ENCODE measurements at regions of chr18 and their contacts with region 1.

Region 1: DNA sequence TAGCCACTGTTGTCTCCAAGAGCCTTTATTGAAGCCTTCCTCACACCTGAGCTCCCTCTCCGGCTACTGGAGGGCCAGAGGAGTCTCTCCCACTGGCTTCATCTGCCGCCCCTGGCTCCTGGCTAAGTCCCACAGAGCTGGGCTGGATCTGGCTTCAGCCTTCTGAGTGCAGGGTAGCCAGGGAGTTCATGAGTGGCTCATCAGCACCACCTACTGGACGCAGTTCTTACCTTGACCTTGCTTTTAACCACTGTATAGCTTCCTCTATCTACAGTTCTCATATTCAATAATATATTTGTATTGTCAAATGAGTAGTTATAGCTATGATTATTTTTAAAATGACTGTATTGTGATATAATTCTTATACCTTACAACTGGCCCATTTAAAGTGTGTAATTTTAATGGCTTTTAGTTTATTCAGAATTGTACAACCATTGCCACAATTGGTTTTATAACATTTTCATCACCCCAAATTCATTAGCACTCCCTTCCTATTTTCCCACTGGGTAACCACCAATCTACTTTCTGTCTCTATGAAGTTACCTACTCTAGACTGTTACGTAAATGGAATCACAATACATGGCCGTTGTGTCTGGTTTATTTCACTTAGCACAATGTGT is 17.7 kb downstream of the CNDP1 start:
- DNase-seq: peak; percentile 87
- H3K4me3 ChIP-seq: no peak overlapping the region
- H3K27ac ChIP-seq: no peak overlapping the region
- H3K4me1 ChIP-seq: no peaks in the 10 kb centered on the region
- H3K27me3 ChIP-seq: no peaks in the 10 kb centered on the region
- CTCF ChIP-seq: peak; percentile 52 to 80 (median 62)
- EP300 ChIP-seq: no peak
- POLR2A ChIP-seq: no peak

Region 2: DNA sequence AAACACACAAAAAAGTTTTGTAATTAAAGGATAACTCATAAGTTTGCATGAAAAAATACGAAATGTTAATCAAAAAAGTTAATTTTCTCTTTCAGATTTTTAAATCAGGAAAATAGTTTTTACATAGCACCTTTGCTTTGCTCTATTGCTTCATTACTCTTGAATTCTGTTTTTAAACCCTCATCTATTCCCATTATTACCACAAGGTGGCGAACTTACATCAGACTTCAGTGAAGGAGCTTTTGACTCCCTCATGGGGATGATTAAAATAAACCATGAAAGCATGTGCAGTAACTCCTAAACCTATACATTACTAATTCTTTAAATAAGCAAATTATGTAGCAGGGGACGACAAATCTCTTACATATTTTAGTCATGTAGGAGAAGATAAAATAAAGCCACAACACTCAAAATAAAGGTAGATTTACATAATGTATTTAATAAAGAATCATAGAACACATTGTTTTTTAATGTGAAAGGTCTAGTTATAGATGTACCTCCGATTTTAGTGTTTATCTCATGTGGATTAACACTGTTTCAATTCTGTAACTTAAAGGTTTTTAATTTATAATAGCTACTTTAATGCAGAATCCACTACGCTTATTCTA is 1789.4 kb before region 1 on chr18:
- intact Hi-C with region 1: loop called (anchors 10 kb)
- DNase-seq: no peak
- H3K4me3 ChIP-seq: no peak overlapping the region
- H3K27ac ChIP-seq: no peak overlapping the region
- H3K4me1 ChIP-seq: no peaks in the 10 kb centered on the region
- H3K27me3 ChIP-seq: no peaks in the 10 kb centered on the region
- CTCF ChIP-seq: peak in 3 of 4 experiments; percentile 37 to 65 (median 53)
- EP300 ChIP-seq: no peak
- POLR2A ChIP-seq: no peak

Region 3: DNA sequence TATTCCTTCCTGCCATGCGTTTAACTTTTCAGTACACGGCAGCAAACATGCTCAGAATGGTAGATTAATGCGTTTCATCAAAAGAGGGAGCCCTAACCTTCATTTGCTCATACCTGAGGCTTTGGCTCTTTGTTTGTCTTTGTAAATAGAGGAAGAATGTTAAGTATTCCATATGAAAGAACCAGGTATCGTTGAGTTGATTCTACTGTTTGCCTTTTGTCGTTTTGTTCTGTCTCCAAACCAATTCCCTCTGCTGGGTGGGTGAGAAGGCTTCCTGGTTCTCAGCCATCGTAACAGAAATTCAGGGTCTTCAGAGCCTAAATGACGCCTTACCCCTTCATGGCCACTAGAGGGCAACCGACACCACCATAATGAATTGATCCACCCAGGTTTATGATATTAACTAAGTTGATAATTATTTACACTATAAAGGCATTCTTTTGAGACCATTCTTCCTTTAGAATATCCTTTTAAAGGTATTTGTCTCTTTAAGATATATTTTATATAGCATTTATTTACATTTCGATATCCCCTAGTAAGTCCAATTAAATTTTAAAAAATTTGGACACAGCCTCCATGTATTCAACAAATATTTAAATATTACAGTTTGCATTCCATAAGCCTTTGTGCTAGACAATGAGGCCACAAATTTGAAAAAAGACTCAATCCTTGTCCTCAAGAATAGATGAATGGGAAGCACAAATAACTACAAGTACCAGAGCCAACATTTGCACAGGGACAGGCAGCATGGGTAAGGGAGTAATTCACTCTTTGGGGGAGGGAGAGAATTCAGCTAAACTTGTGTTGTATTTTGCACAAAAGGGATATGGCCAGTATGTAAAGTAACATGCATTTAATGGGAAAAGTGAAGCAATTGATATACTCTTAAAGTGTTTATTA is 355.6 kb before region 1 on chr18:
- intact Hi-C with region 1: loop called (anchors 2 kb)
- DNase-seq: no peak
- H3K4me3 ChIP-seq: peak overlapping the region in 3 of 4 donors; percentile 2 to 34 (median 22)
- H3K27ac ChIP-seq: no peak overlapping the region
- H3K4me1 ChIP-seq: peaks cover 0 to 14% (median 6%) of the 10 kb centered on the region in 4 donors
- H3K27me3 ChIP-seq: peaks cover 0 to 6% (median 0%) of the 10 kb centered on the region in 3 donors
- CTCF ChIP-seq: peak; percentile 71 to 91 (median 86)
- EP300 ChIP-seq: no peak
- POLR2A ChIP-seq: no peak

Region 4: DNA sequence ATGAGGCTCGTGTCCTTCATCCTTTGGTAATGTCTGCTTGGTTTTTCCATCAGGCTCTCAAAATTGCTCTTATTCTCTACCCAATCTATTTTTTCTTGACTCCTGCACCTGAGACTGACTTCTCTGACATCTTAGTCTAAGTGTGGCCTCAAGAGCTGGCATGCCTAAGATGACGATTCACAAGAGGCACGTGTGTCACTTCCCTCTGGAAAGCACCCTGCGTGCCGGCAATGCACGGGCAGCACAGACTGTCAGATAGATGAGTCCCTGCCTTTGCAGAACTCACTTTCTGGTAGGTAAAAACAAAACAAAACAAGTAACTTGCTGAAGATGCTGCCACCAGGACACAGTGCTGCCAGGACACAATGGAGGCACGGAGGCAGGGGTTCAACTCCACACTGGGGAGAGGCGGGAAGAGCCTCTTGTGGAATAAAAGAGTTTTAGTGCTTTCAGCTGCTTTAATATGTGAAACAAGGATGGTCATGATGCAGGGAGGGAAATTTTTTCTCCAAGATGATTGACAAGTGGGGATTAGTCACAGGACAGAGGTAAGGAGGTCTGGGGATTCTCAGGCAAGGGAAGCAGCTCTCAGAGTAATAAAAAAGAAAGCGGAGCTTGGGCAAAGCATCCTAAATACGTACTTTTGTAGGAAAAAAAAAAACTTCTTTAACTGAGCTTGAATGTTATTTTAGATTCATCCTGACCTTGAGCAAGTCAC is 287.6 kb before region 1 on chr18:
- intact Hi-C with region 1: no loop called
- DNase-seq: no peak
- H3K4me3 ChIP-seq: no peak overlapping the region
- H3K27ac ChIP-seq: no peak overlapping the region
- H3K4me1 ChIP-seq: peaks cover 0 to 35% (median 18%) of the 10 kb centered on the region in 4 donors
- H3K27me3 ChIP-seq: no peaks in the 10 kb centered on the region
- CTCF ChIP-seq: no peak
- EP300 ChIP-seq: no peak
- POLR2A ChIP-seq: no peak

Region 5: DNA sequence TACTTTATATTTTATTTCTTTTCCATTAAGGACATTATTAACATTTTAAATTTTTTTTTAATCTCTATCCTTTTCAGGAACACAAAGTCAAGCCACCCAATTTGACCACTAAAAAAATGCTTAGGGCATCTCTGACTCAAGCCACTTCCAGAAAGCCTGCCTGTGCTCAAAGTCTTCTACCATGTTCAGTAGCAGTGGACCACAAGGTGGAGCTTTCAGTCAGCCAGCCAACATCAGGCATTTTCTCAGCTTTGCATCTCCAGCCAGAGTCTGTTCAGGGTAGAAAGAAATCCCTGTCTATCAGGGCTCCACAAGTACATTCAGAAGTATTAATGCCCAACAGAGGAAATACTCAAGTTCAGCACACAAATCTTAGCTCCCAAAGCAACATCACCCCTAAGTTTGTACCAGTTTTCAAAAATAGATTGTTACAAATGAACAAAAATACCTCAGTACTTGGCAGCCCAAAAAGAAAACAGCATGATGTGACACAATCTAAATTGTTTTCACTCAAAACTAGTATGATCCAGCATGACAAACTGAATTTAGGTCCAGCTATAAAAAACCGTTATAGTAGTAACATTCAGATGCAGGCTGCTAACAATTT is 198.8 kb before region 1 on chr18:
- intact Hi-C with region 1: loop called (anchors 1 kb)
- DNase-seq: peak; percentile 78
- H3K4me3 ChIP-seq: no peak overlapping the region
- H3K27ac ChIP-seq: no peak overlapping the region
- H3K4me1 ChIP-seq: no peaks in the 10 kb centered on the region
- H3K27me3 ChIP-seq: no peaks in the 10 kb centered on the region
- CTCF ChIP-seq: peak; percentile 65 to 77 (median 73)
- EP300 ChIP-seq: no peak
- POLR2A ChIP-seq: no peak

Region 6: DNA sequence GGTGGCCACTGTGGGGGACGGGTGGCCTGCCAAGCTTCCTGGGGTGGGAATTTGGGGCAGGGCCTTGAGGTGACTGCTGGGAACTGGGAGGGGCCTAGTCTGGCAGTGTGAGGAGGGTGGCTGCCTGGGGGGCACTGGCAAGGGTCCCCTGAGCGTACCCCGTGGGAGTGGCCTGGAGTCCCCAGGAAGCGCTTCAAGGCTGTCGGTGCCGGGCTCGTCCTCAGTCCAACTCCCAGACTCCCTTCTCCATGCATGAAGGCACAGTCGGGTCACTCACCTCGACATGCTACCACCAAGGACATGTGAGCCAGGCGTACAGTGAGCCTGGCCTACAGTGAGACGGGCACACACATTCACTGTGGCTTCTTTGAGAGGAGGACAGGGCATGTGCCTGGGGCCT is 770.2 kb after region 1 on chr18:
- intact Hi-C with region 1: no loop called
- DNase-seq: no peak
- H3K4me3 ChIP-seq: no peak overlapping the region
- H3K27ac ChIP-seq: no peak overlapping the region
- H3K4me1 ChIP-seq: peaks cover 0 to 5% (median 0%) of the 10 kb centered on the region in 4 donors
- H3K27me3 ChIP-seq: no peaks in the 10 kb centered on the region
- CTCF ChIP-seq: no peak
- EP300 ChIP-seq: no peak
- POLR2A ChIP-seq: no peak